ENCODE measurements at regions of chr1 and their contacts with region 1.

Region 1: GRCh38 chr1:153958111-153958960 is at the start of gene CRTC2:
- DNase-seq: peak; percentile 95 to 98
- ATAC-seq: peak; percentile 86 to 98 (median 89)
- H3K4me3 ChIP-seq: peak within 1 kb of the TSS; percentile 94
- H3K4me3 Mint-ChIP-seq: peak within 1 kb of the TSS; percentile 96
- H3K27ac ChIP-seq: peak within 1 kb of the TSS; percentile 93
- H3K27ac Mint-ChIP-seq: peak within 1 kb of the TSS; percentile 82 to 92
- H3K4me1 ChIP-seq: peaks cover 53% of the 10 kb centered on the region
- H3K4me1 Mint-ChIP-seq: peaks cover 45 to 67% of the 10 kb centered on the region in 2 donors
- H3K27me3 ChIP-seq: no peaks in the 10 kb centered on the region
- H3K27me3 Mint-ChIP-seq: no peaks in the 10 kb centered on the region
- CTCF ChIP-seq: no peak
- total RNA-seq, gene CRTC2: 144 to 166 (median 154) TPM

Region 2: DNA sequence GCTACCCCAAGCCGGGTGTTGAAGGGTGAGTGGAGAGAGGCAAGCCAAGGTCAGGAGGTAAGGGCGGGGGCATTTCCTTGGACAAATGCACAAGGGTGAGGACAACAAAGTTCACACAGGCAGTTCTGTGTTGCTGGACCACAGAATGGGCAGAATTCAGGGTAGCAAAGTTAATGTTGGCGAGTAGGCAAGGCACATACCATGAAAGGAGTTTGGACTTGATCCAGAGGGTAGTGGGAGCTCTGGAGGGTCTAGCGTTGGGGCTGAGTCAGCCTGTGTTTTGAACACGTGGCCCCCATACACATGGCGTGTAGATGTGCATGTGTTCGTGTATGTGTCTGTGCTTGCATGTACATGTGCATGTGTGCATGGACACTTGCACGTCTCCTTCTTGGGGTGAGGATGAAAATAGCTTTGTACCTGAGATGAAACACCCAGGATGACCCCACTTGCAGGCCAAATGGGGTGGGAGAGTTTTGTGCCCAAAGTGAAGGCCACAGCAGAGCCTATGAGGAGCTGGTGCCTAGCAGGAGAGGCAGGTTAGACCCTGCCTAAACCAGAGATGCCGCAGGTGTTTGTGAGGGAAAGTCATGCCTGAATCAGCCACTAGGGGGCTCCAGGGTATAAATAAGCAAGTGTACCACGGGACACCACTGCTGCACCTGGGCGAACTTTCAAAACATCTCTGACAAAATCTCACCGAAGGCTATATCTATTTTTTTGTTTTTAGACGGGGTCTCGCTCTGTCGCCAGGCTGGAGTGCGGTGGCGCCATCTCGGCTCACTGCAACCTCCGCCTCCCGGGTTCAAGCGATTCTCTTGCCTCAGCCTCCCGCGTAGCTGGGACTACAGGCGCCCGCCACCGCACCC is 161.3 kb before region 1 on chr1:
- intact Hi-C with region 1: no loop called
- DNase-seq: peak; percentile 76 to 92
- ATAC-seq: peak; percentile 80 to 95 (median 82)
- H3K4me3 ChIP-seq: no peak overlapping the region
- H3K4me3 Mint-ChIP-seq: peak overlapping the region; percentile 56
- H3K27ac ChIP-seq: no peak overlapping the region
- H3K27ac Mint-ChIP-seq: peak overlapping the region in 1 of 2 donors; percentile 79
- H3K4me1 ChIP-seq: peaks cover 44% of the 10 kb centered on the region
- H3K4me1 Mint-ChIP-seq: peaks cover 30 to 49% of the 10 kb centered on the region in 2 donors
- H3K27me3 ChIP-seq: no peaks in the 10 kb centered on the region
- H3K27me3 Mint-ChIP-seq: no peaks in the 10 kb centered on the region
- CTCF ChIP-seq: peak; percentile 82

Region 3: DNA sequence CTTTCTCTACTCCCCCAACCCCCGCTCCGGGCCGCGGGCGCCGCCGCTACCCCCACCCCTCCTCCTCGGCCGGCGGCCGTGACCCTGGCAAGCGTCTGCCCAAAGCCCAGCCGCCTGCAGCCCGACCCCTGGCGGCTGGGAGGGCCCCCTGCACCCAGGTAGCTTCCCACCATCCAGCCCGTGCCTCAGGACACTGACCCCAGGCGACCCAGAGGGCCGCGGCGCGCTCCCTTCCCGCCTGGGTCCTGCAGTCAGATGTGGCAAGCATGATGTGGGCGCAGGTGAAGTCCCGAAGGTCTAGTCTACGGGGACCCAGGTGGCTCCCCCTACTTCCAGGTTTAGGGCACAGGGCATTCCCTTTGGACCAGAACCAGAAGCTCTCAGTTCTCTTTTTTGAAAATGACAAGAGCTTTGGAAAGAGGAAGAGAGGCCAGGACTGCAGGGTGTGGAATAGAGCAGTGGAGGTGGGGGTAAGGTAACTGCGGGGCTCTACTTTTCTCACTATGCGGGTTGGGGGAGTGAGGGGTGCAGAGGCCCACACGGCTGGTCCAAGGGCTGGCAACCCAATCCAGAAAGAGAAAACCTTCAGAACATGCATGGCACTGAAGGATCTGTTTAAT is 11.6 kb before region 1 on chr1 and contains the start of gene DENND4B:
- intact Hi-C with region 1: loop called (anchors 1 kb)
- DNase-seq: peak; percentile 77 to 86
- ATAC-seq: peak; percentile 65 to 79 (median 70)
- H3K4me3 ChIP-seq: peak within 1 kb of the TSS; percentile 89
- H3K4me3 Mint-ChIP-seq: peak within 1 kb of the TSS; percentile 94
- H3K27ac ChIP-seq: peak within 1 kb of the TSS; percentile 98
- H3K27ac Mint-ChIP-seq: peak within 1 kb of the TSS; percentile 92 to 96
- H3K4me1 ChIP-seq: peaks cover 44% of the 10 kb centered on the region
- H3K4me1 Mint-ChIP-seq: peaks cover 39 to 51% of the 10 kb centered on the region in 2 donors
- H3K27me3 ChIP-seq: no peaks in the 10 kb centered on the region
- H3K27me3 Mint-ChIP-seq: no peaks in the 10 kb centered on the region
- CTCF ChIP-seq: peak; percentile 84
- total RNA-seq, gene DENND4B: 244 to 322 (median 291) TPM

Region 4: DNA sequence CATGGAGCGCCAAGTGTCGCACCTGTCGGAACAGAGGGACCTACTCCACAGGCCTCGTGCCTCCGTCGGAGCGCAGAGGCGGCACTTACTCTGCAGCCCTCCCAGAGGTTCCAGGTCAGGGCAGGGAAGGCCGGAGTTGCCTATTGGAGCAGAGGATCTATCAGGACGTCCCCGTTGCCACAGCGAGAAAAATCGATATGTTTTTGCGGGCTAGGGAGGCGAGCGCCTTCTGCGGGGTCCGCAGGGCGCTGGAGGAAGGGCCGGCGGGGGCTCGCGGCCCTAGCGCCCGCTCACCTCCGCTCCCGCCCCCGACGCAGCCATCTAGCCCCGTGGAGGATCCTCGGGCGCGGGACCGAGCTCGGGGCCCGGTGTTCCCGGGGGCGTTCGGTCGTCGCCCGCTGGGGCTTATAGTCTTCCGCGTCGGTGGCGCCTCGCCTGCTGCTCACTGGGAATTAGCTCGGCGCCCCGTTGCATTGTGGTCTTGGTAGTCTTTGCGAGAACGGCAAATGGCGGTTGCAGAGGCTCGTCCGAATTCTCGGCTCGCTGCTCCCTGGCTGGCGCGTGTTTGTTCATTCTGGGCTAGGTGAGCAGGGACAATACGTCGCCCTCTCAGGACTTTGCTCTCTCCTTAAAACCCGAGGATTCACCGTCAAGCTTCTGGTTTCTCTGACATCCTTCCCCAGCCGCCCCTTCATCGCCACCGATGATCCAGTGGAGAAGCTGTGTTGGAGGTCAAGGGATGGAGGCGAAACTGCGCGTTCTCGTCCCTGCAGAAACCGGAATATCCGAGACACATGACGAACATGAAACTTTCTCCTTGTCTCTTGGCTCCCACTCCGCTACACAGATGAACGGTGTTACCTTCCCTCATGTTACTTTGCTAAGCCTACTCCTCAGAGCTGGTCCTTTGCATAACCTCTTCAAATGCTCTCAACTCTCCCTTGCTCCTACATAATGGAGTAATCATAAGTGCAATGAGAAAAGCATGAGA is 19.2 kb after region 1 on chr1 and contains the start of gene JTB:
- intact Hi-C with region 1: loop called (anchors 2 kb)
- DNase-seq: peak; percentile 76 to 91
- ATAC-seq: peak; percentile 97 to 98 (median 97)
- H3K4me3 ChIP-seq: peak within 1 kb of the TSS; percentile 84
- H3K4me3 Mint-ChIP-seq: peak within 1 kb of the TSS; percentile 89
- H3K27ac ChIP-seq: peak within 1 kb of the TSS; percentile 37
- H3K27ac Mint-ChIP-seq: peak within 1 kb of the TSS; percentile 76 to 89
- H3K4me1 ChIP-seq: peaks cover 16% of the 10 kb centered on the region
- H3K4me1 Mint-ChIP-seq: peaks cover 25 to 30% of the 10 kb centered on the region in 2 donors
- H3K27me3 ChIP-seq: no peaks in the 10 kb centered on the region
- H3K27me3 Mint-ChIP-seq: peaks cover 0 to 4% of the 10 kb centered on the region in 2 donors
- CTCF ChIP-seq: no peak
- total RNA-seq, gene JTB: 96.9 to 107 (median 101) TPM

Measured in natural killer cell (primary cell).